CD8-positive, alpha-beta T cell (primary cell): ENCODE measurements at regions of chr15 and their contacts with region 1.

Region 1: DNA sequence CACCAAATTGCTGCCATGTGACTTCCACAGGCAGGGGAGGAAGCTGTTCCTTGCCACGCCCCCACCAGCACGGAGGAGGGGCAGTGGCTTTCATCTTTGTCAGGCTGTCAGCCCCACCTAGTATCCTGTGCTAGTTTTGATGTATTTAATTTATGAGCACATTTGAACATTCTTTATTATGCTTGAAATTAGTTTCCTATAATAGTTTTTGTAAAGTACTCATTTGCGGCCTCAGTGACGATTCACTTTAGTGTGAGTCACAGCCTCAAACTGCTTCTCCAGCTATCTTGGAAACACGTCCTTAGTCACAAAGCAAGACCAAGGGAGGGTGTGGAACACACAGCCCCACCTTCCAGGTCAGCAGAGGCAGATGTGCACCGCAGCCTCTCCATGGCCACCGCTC is 239.9 kb upstream of the ATP10A start:
- DNase-seq: no peak
- ATAC-seq: no peak
- H3K4me3 ChIP-seq: no peak overlapping the region
- H3K4me3 Mint-ChIP-seq: no peak overlapping the region
- H3K27ac ChIP-seq: no peak overlapping the region
- H3K27ac Mint-ChIP-seq: no peak overlapping the region
- H3K4me1 ChIP-seq: no peaks in the 10 kb centered on the region
- H3K4me1 Mint-ChIP-seq: no peaks in the 10 kb centered on the region
- H3K27me3 ChIP-seq: no peaks in the 10 kb centered on the region
- H3K27me3 Mint-ChIP-seq: no peaks in the 10 kb centered on the region
- CTCF ChIP-seq: no peak

Region 2: DNA sequence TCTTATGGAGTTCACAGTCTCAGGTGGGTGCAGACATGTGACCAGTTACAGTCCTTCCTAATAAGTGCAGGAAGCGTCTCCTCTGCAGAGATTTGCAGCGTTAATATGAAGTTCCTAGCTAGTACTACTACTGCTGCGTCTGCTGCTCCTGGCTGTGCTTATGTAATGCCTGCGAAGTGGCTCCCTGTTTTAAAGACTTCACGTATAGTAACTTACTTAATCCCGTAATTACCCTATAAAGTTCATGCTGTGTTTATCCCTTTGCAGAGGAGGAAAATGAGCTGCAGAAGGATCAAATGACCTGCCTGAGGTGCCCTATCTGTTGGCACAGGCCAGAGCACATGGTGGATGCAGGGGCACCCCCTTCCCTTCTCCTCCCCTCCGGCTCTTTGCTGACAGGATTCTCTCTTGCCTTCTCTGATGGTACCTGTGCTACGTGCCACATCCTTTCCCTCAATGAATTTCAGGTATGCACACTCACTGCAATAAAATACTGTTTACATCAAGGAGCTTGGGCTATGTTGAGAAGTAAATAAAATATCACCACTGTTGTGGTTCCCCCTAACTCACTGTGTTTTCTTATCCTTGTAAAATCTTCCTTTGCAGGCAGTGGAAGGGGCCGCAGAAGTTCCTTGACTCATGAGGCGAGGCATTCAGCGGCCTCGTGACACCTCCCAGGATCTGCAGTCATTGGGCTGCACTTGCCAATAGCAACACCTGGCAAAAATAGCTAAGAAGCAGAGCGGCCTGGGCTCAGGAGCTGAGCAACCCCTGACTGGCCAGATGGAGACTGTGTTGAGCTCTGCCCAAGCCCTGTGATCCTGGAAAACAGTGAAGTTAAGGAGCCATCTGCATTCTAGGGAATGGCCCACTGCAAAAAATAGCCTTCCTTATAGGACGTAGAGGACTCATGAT is 51.0 kb before region 1 on chr15:
- CTCF ChIA-PET with region 1: no interaction called
- POLR2A ChIA-PET with region 1: no interaction called
- intact Hi-C with region 1: loop called in 1 of 2 experiments (anchors 10 kb)
- DNase-seq: no peak
- ATAC-seq: no peak
- H3K4me3 ChIP-seq: no peak overlapping the region
- H3K4me3 Mint-ChIP-seq: no peak overlapping the region
- H3K27ac ChIP-seq: no peak overlapping the region
- H3K27ac Mint-ChIP-seq: no peak overlapping the region
- H3K4me1 ChIP-seq: no peaks in the 10 kb centered on the region
- H3K4me1 Mint-ChIP-seq: no peaks in the 10 kb centered on the region
- H3K27me3 ChIP-seq: no peaks in the 10 kb centered on the region
- H3K27me3 Mint-ChIP-seq: peaks cover 13% of the 10 kb centered on the region
- CTCF ChIP-seq: no peak

Region 3: DNA sequence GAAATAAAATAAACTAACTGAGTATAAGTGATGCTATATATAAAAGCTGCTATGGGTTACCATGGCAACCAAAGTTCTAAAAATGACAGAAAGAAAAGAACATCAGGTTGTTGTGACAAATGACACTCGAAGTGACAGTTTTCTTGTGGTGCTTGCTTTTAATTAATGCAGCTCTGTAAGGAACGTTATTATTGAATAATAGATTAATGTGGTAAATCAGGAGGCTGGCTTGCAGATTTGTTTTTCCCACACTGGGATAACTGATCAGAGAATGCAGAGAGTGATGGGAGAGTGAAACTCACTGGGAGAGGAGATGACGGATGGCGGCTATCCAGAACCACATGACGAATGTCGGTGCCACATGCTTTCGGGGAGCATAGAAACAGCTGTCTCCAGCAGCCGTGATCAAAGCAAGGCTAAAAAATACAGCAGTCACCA is 32.9 kb before region 1 on chr15:
- CTCF ChIA-PET with region 1: no interaction called
- POLR2A ChIA-PET with region 1: no interaction called
- intact Hi-C with region 1: no loop called
- DNase-seq: no peak
- ATAC-seq: no peak
- H3K4me3 ChIP-seq: no peak overlapping the region
- H3K4me3 Mint-ChIP-seq: no peak overlapping the region
- H3K27ac ChIP-seq: no peak overlapping the region
- H3K27ac Mint-ChIP-seq: no peak overlapping the region
- H3K4me1 ChIP-seq: no peaks in the 10 kb centered on the region
- H3K4me1 Mint-ChIP-seq: no peaks in the 10 kb centered on the region
- H3K27me3 ChIP-seq: no peaks in the 10 kb centered on the region
- H3K27me3 Mint-ChIP-seq: peaks cover 14% of the 10 kb centered on the region
- CTCF ChIP-seq: no peak